ENCODE measurements at regions of chr18 and their contacts with region 1.

Region 1: GRCh38 chr18:36757081-36757480 is 71.7 kb downstream of the TPGS2 start:
- DNase-seq: no peak
- ATAC-seq: peak; percentile 71 to 91 (median 79)
- H3K4me3 ChIP-seq: no peak overlapping the region
- H3K27ac ChIP-seq: no peak overlapping the region
- H3K4me1 ChIP-seq: peaks cover 6% of the 10 kb centered on the region
- H3K27me3 ChIP-seq: no peaks in the 10 kb centered on the region
- CTCF ChIP-seq: peak; percentile 72

Region 2: DNA sequence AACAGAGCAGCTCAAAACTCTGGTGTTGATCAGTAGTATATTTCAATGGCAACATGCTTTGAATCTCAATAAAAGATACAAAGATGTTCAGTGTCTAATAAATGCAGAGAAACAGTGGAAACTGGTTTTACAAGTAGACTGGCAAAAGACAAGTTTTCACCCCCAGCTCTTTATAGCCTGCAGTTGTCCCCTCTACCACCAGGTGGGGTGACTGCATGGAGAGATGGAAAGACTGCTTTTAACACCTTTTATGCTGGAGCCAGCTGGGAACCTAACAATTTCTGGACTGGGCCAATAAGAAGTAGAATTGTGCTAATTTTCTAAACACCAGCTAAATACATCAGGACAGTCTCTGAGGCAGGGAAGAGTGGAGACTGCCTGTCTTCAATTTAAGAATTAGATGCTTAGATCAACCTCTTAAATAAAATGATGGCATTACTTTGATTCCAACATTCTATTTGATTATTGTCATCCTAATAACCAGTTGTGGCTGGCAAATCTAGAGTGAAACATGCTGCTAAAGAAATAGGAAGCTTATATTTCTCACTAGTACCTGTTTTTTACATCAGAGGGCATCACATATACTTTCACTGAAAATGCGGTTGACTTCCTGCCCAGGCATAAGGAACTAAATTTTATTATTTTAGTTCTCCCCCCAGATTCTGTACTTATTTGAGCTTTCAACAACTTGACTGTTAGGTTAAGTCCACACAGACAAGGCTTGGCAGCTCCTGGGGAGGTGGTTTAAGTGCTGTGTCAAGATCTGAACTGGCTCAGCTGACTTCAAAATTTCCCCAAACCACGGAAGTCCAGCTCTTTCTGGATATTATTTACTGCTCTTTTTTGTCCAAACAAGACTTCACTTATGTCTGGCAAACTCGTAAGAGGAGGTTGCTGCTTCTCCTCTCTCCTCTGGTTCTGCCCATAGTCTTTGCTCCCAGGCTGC is 68.8 kb before region 1 on chr18:
- intact Hi-C with region 1: loop called (anchors 2 to 5 kb)
- DNase-seq: peak; percentile 36 to 68
- ATAC-seq: peak; percentile 80 to 85 (median 81)
- H3K4me3 ChIP-seq: no peak overlapping the region
- H3K27ac ChIP-seq: no peak overlapping the region
- H3K4me1 ChIP-seq: no peaks in the 10 kb centered on the region
- H3K27me3 ChIP-seq: no peaks in the 10 kb centered on the region
- CTCF ChIP-seq: peak; percentile 91

Region 3: DNA sequence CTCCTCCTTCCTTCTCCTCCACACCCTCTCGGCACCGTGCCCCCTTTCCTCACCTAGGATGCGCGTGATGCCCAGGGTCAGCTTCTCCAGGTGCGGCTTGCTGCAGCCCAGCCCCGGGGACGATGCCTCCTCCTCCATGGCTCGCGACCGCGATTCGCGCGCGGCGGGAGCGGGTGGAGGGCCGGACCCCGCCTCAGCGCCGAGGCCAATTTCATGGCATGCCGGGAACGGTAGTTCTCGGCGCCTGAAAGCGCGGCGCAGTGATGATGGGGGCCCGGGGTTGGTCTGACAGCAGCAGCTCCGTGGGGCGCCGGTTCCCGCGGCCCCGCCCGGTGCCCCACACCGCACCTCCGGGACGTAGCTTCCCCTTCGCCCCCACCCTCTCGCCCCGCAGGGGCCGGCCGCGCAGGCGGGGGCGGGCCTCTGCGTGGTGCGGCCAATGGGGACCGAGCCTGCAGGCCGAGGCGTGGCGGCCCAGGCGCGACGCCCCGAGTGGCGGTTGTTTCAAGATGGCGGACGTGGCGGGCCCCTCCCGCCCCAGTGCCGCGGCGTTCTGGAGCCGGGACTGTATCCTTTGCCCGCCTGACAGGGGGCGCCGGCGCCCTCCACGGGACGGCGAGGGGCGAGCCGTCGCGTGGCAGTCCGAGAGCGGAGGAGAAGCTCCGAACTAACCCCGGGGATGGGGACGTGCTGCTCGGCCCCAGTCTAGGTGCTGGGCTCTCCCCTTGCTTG is 71.7 kb after region 1 on chr18 and contains the starts of genes KIAA1328 and TPGS2:
- intact Hi-C with region 1: no loop called
- DNase-seq: peak; percentile 86 to 91
- ATAC-seq: peak; percentile 96 to 98 (median 96)
- H3K4me3 ChIP-seq: peak within 1 kb of the TSS; percentile 90
- H3K27ac ChIP-seq: peak within 1 kb of the TSS; percentile 76
- H3K4me1 ChIP-seq: peaks cover 11% of the 10 kb centered on the region
- H3K27me3 ChIP-seq: no peaks in the 10 kb centered on the region
- CTCF ChIP-seq: peak; percentile 34
- total RNA-seq, gene KIAA1328: 3.1 to 4.4 (median 3.5) TPM
- total RNA-seq, gene TPGS2: 8.8 to 16.2 (median 13.5) TPM

Measured in psoas muscle (tissue), 8 donors.